ENCODE measurements at regions of chr16 and their contacts with region 1.

Region 1: DNA sequence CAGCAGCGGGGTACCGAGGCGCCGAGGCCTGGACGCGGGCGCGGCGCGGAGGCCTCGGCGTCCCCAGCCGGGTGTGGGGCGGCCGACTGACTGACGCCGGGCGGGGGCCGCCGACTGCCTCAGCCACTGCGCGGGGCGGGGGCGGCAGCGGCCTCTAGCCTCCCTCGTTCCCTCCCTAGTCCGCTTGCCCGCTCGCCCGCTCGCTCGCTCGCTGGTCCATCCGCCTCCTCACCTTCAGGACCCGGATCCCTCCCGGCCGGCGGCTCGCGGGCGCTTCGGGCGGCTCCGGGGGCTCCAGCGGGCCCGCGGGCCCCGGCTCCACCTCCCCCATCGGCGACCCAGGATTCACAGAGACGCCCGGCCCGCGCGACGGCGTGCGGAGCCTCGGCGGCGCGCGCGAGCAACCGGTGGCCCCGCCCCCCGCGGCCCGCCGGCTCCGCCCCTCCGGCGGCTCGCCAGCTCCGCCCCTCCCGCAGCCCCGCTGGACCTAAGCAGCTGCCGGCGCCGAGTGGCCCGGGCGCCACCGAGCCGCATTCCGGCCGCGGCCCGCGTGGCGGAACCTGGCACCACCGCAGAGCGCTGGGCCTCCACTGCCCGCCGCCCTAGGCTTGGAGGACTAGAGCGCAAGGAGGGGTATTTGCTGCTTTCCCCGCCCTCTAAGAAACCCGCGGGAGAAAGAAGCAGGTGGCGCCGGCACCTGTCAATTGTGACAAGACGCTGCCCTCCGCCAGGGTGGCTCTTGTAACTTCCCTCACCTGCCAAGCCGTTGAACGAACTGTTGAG is 773 bp downstream of the PHLPP2 start:
- DNase-seq: peak; percentile 74
- H3K4me3 Mint-ChIP-seq: peak overlapping the region; percentile 80
- H3K27ac Mint-ChIP-seq: no peak overlapping the region
- H3K4me1 Mint-ChIP-seq: peaks cover 18% of the 10 kb centered on the region
- H3K27me3 Mint-ChIP-seq: peaks cover 6% of the 10 kb centered on the region

Region 2: GRCh38 chr16:71746442-71747046 is 22.8 kb after region 1 on chr16:
- CTCF ChIA-PET with region 1: interaction called, 4 read pairs
- intact Hi-C with region 1: loop called (anchors 1 kb)
- DNase-seq: peak; percentile 49
- H3K4me3 Mint-ChIP-seq: no peak overlapping the region
- H3K27ac Mint-ChIP-seq: no peak overlapping the region
- H3K4me1 Mint-ChIP-seq: peaks cover 5% of the 10 kb centered on the region
- H3K27me3 Mint-ChIP-seq: no peaks in the 10 kb centered on the region